ENCODE measurements at regions of chr13 and their contacts with region 1.

Region 1: GRCh38 chr13:112241288-112241687 is 134.9 kb upstream of the SPACA7 start:
- DNase-seq: no peak
- H3K4me3 ChIP-seq: no peak overlapping the region
- CTCF ChIP-seq: no peak

Region 2: DNA sequence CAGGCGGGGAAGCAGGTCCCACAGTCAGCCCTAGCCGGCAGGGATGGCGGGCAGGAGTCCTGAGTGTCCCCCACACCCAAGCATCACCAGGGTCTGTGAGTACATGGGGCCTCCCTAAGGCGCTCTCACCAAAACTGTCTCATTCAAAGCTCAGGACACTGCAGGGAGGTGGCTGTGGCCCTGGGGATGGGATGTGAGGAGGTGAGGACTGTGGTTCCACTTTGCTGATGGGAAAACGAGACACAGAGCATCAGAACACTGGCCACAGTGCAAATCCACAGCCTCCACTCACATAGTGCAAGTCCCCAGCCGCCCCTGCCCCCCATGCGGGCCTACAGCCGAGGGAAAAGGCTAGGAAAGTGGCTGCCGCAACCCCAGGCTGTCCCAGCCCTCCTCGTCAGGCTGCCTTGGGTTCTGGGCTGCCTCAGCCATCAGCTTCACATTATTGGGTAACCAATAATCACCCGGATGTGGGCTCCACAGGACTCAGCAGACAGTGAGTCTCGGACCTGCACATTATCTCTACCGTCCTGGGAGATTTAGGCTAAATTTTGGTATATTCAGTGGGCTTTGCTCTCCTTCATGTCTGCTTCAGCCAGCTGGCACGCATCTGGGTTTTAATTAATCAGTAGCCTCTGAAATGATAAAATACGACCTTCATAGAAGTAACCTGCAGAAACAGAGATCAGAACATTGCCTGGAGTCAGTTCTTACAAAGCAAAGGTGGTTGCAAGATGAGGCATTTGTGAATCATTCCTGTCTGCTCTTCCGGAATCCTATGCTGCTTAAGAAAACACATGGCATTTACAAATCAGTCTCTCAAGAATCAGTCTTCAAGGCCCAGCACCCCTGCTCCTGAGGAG is 97.3 kb before region 1 on chr13:
- in situ Hi-C with region 1: no loop called
- DNase-seq: no peak
- H3K4me3 ChIP-seq: no peak overlapping the region
- CTCF ChIP-seq: no peak

Region 3: GRCh38 chr13:112159575-112160547 is 81.4 kb before region 1 on chr13:
- in situ Hi-C with region 1: loop called (anchors 5 kb)
- DNase-seq: no peak
- H3K4me3 ChIP-seq: no peak overlapping the region
- CTCF ChIP-seq: no peak

Region 4: GRCh38 chr13:112187527-112188296 is 53.6 kb before region 1 on chr13:
- in situ Hi-C with region 1: loop called (anchors 5 kb)
- DNase-seq: no peak
- H3K4me3 ChIP-seq: no peak overlapping the region
- CTCF ChIP-seq: no peak

Measured in astrocyte of the cerebellum (primary cell).